ENCODE measurements at regions of chr12 and their contacts with region 1.

Region 1: GRCh38 chr12:57520053-57520871 is at the start of gene DDIT3:
- DNase-seq: peak; percentile 99
- H3K4me3 ChIP-seq: peak within 1 kb of the TSS; percentile 71
- H3K4me3 Mint-ChIP-seq: peak within 1 kb of the TSS; percentile 86
- H3K27ac Mint-ChIP-seq: peak within 1 kb of the TSS; percentile 94
- H3K4me1 ChIP-seq: peaks cover 33% of the 10 kb centered on the region
- H3K4me1 Mint-ChIP-seq: peaks cover 29% of the 10 kb centered on the region
- H3K27me3 ChIP-seq: no peaks in the 10 kb centered on the region
- H3K27me3 Mint-ChIP-seq: no peaks in the 10 kb centered on the region
- CTCF ChIP-seq: no peak
- total RNA-seq, gene DDIT3: 62.7 and 79.2 TPM in 2 replicates

Region 2: DNA sequence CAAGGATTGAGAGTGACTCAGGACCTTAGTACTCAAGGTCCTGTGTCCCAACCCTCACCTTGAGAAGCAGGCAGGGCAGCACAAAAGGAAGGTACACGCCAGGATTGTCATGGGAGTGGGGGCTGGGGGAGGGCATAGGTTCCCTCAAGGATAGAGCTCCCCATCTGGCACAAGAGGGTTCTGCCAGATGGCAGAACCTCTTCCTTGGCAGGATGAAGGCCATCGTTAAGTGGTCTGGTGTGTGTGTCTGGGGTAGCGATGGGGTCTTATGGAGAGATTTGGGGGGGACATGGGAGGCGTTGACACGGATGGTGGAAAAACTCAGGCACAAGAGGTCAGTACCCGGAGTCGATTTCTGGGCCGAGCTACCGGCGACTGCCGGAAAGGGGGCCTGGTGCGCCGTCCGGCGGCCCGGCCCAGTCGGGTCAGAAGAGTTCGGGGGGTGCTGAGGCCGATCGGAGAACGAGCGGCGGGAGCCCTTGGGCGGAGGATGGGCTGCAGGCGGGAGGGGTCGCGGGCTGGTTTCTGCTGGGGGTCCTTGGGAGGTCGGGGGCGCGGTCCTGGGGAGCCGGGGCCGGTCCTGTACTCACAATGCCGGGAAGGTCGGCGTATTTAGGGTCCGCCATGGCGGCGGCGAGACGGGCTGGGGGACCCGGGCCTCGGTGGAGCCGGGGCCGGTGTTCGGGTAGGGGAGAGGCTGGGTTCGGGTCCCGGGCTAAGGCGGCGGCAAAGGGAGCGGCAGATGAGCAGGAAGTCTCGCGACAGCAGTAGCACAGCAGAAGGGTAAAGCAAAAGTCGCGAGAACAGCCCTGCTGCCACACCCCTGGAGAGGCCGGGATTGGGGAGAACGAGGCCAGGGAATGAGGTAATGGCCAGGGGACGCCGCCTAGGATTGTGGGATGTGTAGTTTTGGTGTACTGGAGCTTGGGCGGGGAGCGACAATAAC is 26.4 kb after region 1 on chr12 and contains the start of gene DCTN2:
- CTCF ChIA-PET with region 1: no interaction called
- POLR2A ChIA-PET with region 1: interaction called, 7 read pairs
- intact Hi-C with region 1: loop called (anchors 2 kb)
- DNase-seq: peak; percentile 96 to 97
- H3K4me3 ChIP-seq: peak within 1 kb of the TSS; percentile 77
- H3K4me3 Mint-ChIP-seq: peak within 1 kb of the TSS; percentile 97
- H3K27ac Mint-ChIP-seq: peak within 1 kb of the TSS; percentile 96
- H3K4me1 ChIP-seq: peaks cover 9% of the 10 kb centered on the region; the same call in 1 of the 2 replicates
- H3K4me1 Mint-ChIP-seq: peaks cover 10% of the 10 kb centered on the region
- H3K27me3 ChIP-seq: peaks cover 3% of the 10 kb centered on the region
- H3K27me3 Mint-ChIP-seq: peaks cover 22% of the 10 kb centered on the region
- CTCF ChIP-seq: peak in 1 of 2 experiments; percentile 7
- total RNA-seq, gene DCTN2: 89.4 and 94.4 TPM in 2 replicates

Region 3: DNA sequence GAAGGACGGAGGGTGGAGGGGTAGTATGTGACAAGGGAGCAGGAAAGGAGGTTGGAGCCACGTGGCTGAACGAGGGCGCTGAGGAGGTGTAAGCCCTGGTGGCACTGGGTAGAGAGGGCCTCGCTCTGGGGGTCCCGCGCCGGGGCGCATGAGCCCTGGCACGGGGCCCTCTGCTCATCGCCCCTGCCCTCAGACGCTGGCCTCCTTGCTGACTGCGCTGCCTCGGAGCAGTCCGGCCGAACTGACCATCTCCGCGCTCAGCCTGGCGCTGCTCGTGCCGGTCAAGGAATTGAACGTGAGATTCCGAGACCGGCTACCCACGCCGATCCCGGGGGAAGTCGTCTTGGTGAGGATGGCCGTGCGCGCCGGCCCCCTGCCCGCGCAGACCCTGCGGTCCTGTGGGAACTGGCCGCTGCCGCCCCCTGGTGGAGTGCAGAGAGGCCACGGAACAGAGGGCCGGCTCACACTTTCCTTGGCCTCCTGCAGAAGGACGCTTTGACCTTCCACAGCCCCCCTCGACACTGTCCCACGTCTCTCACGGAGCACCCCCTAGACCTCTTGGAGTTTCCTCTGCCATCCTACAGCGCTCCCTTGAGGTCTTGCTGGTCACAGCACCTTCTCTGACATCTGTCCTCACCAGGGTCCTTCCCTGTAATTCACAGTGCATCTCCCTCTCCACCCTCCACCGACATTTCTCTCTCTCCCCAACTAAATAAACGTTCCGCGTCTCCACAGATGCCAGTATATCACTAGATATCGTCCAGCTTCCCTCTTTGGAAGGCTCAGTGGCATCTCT is 101.4 kb after region 1 on chr12:
- CTCF ChIA-PET with region 1: no interaction called
- POLR2A ChIA-PET with region 1: no interaction called
- intact Hi-C with region 1: loop called (anchors 5 kb)
- DNase-seq: peak; percentile 59 to 81
- H3K4me3 ChIP-seq: peak overlapping the region; percentile 34
- H3K4me3 Mint-ChIP-seq: peak overlapping the region; percentile 75
- H3K27ac Mint-ChIP-seq: no peak overlapping the region
- H3K4me1 ChIP-seq: no peaks in the 10 kb centered on the region; the same call in 1 of the 2 replicates
- H3K4me1 Mint-ChIP-seq: peaks cover 7% of the 10 kb centered on the region
- H3K27me3 ChIP-seq: peaks cover 4% of the 10 kb centered on the region
- H3K27me3 Mint-ChIP-seq: peaks cover 26% of the 10 kb centered on the region
- CTCF ChIP-seq: peak; percentile 85 to 94

Region 4: GRCh38 chr12:57726151-57726883 is 206.1 kb after region 1 on chr12:
- CTCF ChIA-PET with region 1: no interaction called
- POLR2A ChIA-PET with region 1: no interaction called
- intact Hi-C with region 1: loop called (anchors 5 kb)
- DNase-seq: peak; percentile 83 to 91
- H3K4me3 ChIP-seq: peak overlapping the region; percentile 55
- H3K4me3 Mint-ChIP-seq: peak overlapping the region; percentile 85
- H3K27ac Mint-ChIP-seq: peak overlapping the region; percentile 45
- H3K4me1 ChIP-seq: no peaks in the 10 kb centered on the region
- H3K4me1 Mint-ChIP-seq: no peaks in the 10 kb centered on the region
- H3K27me3 ChIP-seq: no peaks in the 10 kb centered on the region
- H3K27me3 Mint-ChIP-seq: peaks cover 12% of the 10 kb centered on the region
- CTCF ChIP-seq: peak; percentile 76 to 89

Measured in Caco-2 (cell line).